PC-3 (cell line): ENCODE measurements at regions of chr5 and their contacts with region 1.

Region 1: GRCh38 chr5:115460472-115460871 is 84.1 kb downstream of the FEM1C start:
- DNase-seq: peak; percentile 95
- ATAC-seq: peak; percentile 72
- H3K4me3 ChIP-seq: peak overlapping the region; percentile 55
- H3K27ac ChIP-seq: peak overlapping the region; percentile 99
- H3K4me1 ChIP-seq: peaks cover 51% of the 10 kb centered on the region
- H3K27me3 ChIP-seq: no peaks in the 10 kb centered on the region
- CTCF ChIP-seq: no peak

Region 2: DNA sequence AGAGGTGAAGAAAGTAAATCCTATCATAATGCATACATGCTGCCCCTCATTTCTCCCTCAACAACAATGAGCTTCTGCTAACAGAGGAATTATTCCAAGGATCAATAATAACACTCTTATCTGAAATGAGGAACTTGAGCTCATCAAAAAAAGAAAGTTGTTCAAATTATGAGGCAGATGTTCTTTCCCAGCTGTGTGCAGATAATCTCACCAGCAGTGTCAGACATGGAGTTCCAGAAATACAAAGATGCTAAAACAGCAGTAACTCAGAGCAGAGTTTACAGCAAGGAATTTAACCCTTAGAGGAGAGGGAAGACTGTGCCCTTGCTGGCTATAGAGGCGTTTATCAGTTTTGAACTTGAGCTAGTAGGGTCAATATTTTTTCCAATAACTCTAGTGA is 443.8 kb before region 1 on chr5:
- CTCF ChIA-PET with region 1: no interaction called
- POLR2A ChIA-PET with region 1: no interaction called
- intact Hi-C with region 1: no loop called
- DNase-seq: no peak
- ATAC-seq: no peak
- H3K4me3 ChIP-seq: no peak overlapping the region
- H3K27ac ChIP-seq: no peak overlapping the region
- H3K4me1 ChIP-seq: no peaks in the 10 kb centered on the region
- H3K27me3 ChIP-seq: no peaks in the 10 kb centered on the region
- CTCF ChIP-seq: no peak

Region 3: GRCh38 chr5:115377468-115378217 is 82.8 kb before region 1 on chr5:
- CTCF ChIA-PET with region 1: no interaction called
- POLR2A ChIA-PET with region 1: no interaction called
- intact Hi-C with region 1: loop called (anchors 2 kb)
- DNase-seq: peak; percentile 86
- ATAC-seq: peak; percentile 88
- H3K4me3 ChIP-seq: peak overlapping the region; percentile 9; the same call in 1 of the 2 replicates
- H3K27ac ChIP-seq: peak overlapping the region; percentile 41
- H3K4me1 ChIP-seq: peaks cover 29% of the 10 kb centered on the region
- H3K27me3 ChIP-seq: no peaks in the 10 kb centered on the region
- CTCF ChIP-seq: peak; percentile 28; the same call in 1 of the 2 replicates

Region 4: DNA sequence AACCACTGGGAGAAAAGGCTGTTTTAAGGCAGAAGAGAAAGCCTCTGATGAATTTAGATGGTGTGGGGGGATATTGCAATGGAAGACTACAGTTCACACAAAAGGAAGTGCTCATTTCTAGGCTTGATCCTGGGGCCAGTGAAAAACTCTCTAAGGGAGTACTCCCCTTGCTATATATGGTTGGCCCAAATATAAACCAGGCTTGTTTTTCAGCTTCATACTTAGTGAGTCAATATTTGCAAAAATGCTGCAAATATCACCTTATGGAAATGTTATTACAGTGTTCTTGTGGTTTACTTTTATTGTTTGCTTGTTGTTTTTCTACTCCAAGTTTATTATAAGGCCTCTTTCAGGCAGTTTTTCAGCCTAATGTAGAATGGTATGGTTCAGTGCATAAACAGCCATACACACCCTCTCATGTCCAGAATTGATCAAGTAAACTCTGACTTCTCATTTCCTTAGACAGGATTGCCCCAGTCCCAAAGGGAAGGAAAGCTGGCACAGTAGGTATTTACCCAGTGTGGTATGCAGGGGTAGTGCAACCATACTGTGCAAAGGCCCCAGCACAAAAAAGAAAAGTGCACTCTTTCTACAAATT is 31.0 kb before region 1 on chr5:
- CTCF ChIA-PET with region 1: no interaction called
- POLR2A ChIA-PET with region 1: no interaction called
- intact Hi-C with region 1: loop called (anchors 1 kb)
- DNase-seq: peak; percentile 86
- ATAC-seq: peak; percentile 78
- H3K4me3 ChIP-seq: peak overlapping the region; percentile 38
- H3K27ac ChIP-seq: peak overlapping the region; percentile 96
- H3K4me1 ChIP-seq: peaks cover 66% of the 10 kb centered on the region
- H3K27me3 ChIP-seq: no peaks in the 10 kb centered on the region
- CTCF ChIP-seq: no peak

Region 5: DNA sequence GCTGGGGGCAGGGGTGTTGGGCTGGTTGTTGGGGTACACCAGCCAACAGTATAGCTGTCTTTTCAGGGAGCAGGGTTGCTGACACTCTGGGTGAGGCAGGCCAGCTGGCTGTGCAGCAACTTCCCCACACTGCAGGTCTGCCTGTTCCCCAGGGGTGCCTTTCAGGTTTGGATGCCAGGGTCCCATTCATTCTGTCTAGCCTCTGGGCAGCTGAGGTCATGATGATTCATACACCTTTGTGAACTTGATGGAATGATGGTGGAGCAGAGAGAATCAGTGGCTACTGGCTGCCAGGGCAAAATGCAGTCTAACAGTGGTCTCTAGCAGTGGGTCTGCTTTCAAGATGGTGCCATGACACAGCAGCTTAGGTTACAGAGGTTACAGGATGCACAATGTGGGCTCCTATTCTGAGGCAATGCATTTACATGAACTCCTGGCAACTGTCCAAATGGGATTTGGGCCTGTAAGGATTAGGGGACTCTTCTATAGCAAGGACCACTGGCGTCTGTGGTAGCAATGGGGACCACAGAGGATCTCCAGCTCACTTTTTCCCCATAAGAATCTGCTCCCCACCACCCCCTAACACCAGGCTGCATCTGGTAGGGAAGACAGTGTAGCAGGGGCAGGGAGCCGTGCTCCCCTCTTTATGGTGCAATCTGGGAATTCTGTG is 19.6 kb before region 1 on chr5:
- CTCF ChIA-PET with region 1: no interaction called
- POLR2A ChIA-PET with region 1: no interaction called
- intact Hi-C with region 1: no loop called
- DNase-seq: no peak
- ATAC-seq: peak; percentile 25; the same call in 1 of the 2 replicates
- H3K4me3 ChIP-seq: no peak overlapping the region
- H3K27ac ChIP-seq: no peak overlapping the region
- H3K4me1 ChIP-seq: peaks cover 23% of the 10 kb centered on the region
- H3K27me3 ChIP-seq: no peaks in the 10 kb centered on the region
- CTCF ChIP-seq: no peak

Region 6: GRCh38 chr5:115472271-115473025 is 12.0 kb after region 1 on chr5:
- CTCF ChIA-PET with region 1: no interaction called
- POLR2A ChIA-PET with region 1: no interaction called
- intact Hi-C with region 1: no loop called
- DNase-seq: no peak
- ATAC-seq: peak; percentile 37; the same call in 1 of the 2 replicates
- H3K4me3 ChIP-seq: no peak overlapping the region
- H3K27ac ChIP-seq: no peak overlapping the region
- H3K4me1 ChIP-seq: peaks cover 4% of the 10 kb centered on the region
- H3K27me3 ChIP-seq: no peaks in the 10 kb centered on the region
- CTCF ChIP-seq: no peak

Region 7: GRCh38 chr5:115507681-115508080 is 47.2 kb after region 1 on chr5:
- CTCF ChIA-PET with region 1: no interaction called
- POLR2A ChIA-PET with region 1: interaction called, 3 read pairs
- intact Hi-C with region 1: loop called (anchors 2 kb)
- DNase-seq: peak; percentile 8
- ATAC-seq: peak; percentile 9; the same call in 1 of the 2 replicates
- H3K4me3 ChIP-seq: no peak overlapping the region
- H3K27ac ChIP-seq: no peak overlapping the region
- H3K4me1 ChIP-seq: peaks cover 11% of the 10 kb centered on the region
- H3K27me3 ChIP-seq: no peaks in the 10 kb centered on the region
- CTCF ChIP-seq: no peak

Region 8: GRCh38 chr5:115522832-115523403 is 62.4 kb after region 1 on chr5:
- CTCF ChIA-PET with region 1: no interaction called
- POLR2A ChIA-PET with region 1: no interaction called
- intact Hi-C with region 1: no loop called
- DNase-seq: no peak
- ATAC-seq: no peak
- H3K4me3 ChIP-seq: no peak overlapping the region
- H3K27ac ChIP-seq: 0 out of 2 replicates have a peak overlapping the region, but pooled peaks have one; percentile 61
- H3K4me1 ChIP-seq: peaks cover 40% of the 10 kb centered on the region
- H3K27me3 ChIP-seq: no peaks in the 10 kb centered on the region
- CTCF ChIP-seq: no peak

Region 9: GRCh38 chr5:115579747-115580173 is 119.3 kb after region 1 on chr5:
- CTCF ChIA-PET with region 1: interaction called, 3 read pairs
- POLR2A ChIA-PET with region 1: no interaction called
- intact Hi-C with region 1: loop called (anchors 2 kb)
- DNase-seq: peak; percentile 71
- ATAC-seq: peak; percentile 89
- H3K4me3 ChIP-seq: no peak overlapping the region
- H3K27ac ChIP-seq: peak overlapping the region; percentile 21; the same call in 1 of the 2 replicates
- H3K4me1 ChIP-seq: peaks cover 42% of the 10 kb centered on the region
- H3K27me3 ChIP-seq: no peaks in the 10 kb centered on the region
- CTCF ChIP-seq: no peak